Dorsolateral prefrontal cortex (tissue), 120 donors: ENCODE measurements at regions of chr11 and their contacts with region 1.

Region 1: DNA sequence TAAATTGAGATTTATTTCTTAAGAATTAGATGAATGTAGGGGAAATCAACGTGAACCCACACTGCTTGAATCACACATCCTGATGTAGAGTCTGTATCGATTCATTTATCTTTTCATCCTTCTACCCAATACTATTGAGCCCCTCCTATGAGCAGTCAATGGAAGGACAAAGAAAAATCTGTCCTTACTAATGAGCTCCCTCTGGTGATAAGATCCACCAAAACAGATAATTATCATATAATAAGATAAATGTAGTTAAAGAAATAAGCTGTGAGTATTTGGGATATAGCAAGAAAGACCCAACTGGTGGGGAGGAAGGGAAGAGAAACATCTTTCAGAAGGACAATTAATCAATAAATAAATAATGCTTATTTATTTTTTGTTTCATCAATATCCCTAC is 385.1 kb upstream of the CCDC90B start:
- DNase-seq: no peak
- H3K4me3 ChIP-seq: no peak overlapping the region
- H3K27ac ChIP-seq: peak overlapping the region in 6 of 59 donors; percentile 0 to 36 (median 18)
- H3K27me3 ChIP-seq: no peaks in the 10 kb centered on the region
- CTCF ChIP-seq: peak in 47 of 56 donors; percentile 5 to 67 (median 39)

Region 2: DNA sequence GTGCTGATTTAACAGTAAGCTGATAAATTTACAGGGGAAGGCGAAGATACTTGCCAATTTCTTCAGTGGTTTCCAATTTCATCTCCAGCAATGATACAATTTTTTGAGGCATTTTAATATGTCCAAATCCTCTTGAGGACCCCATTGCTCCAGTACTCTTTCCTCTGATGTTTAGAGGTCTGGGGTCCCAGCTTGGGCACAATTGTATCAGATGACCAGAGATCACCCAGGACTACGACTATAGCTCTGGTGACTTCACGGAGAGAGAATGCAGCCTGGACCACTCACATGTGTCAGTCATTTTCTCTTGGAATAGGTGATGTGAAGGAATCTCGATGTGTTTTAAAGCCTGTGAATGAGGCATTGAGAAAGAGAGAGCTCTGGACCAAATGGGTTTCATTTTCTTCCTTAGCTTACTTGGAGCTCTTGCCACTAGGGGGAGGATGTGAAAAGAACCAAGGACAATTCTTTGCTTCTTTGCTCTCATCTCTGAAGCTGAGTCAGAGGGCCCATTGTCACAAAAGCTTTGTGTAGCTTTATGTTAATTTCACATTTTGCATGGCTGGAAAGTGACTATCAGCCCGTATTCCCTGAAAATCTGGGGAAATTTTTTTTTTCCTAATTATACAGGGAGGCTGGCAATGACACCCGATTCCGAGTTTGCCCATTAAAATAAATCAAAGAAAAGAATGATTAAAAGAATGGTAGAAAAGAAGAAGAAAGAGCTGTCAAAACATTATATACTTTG is 378.4 kb before region 1 on chr11:
- intact Hi-C with region 1: loop called (anchors 5 to 10 kb)
- DNase-seq: peak in 3 of 10 donors; percentile 10 to 57 (median 47)
- H3K4me3 ChIP-seq: peak overlapping the region in 55 of 59 donors; percentile 4 to 64 (median 40)
- H3K27ac ChIP-seq: peak overlapping the region in 54 of 59 donors; percentile 13 to 88 (median 68)
- H3K27me3 ChIP-seq: no peaks in the 10 kb centered on the region
- CTCF ChIP-seq: peak; percentile 61 to 93 (median 84)

Region 3: DNA sequence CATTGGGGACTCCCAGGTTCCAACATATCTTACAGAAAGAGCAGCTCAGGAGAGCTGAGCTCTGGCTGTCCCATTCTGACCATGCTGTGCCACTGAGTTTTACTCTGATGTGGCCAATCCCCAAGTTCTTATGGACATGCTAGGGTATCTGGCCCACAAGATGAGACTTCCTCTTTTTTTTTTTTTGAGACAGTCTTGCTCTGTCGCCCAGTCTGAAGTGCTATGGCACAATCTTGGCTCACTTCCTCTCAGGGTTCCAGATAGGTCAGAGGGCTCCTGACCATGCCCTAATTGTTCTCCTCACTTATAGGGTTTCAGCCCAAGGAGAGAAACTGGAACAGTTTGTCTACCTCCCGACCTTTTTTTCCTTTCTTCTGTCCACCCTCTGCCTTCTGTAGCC is 232.9 kb before region 1 on chr11:
- intact Hi-C with region 1: no loop called
- DNase-seq: no peak
- H3K4me3 ChIP-seq: no peak overlapping the region
- H3K27ac ChIP-seq: no peak overlapping the region
- H3K27me3 ChIP-seq: no peaks in the 10 kb centered on the region
- CTCF ChIP-seq: no peak

Region 4: GRCh38 chr11:83521647-83522596 is 149.4 kb before region 1 on chr11:
- intact Hi-C with region 1: loop called in 1 of 2 experiments (anchors 5 kb)
- DNase-seq: no peak
- H3K4me3 ChIP-seq: no peak overlapping the region
- H3K27ac ChIP-seq: peak overlapping the region in 13 of 59 donors; percentile 7 to 61 (median 33)
- H3K27me3 ChIP-seq: no peaks in the 10 kb centered on the region
- CTCF ChIP-seq: peak in 39 of 56 donors; percentile 10 to 58 (median 30)

Region 5: GRCh38 chr11:83612891-83613766 is 58.2 kb before region 1 on chr11:
- intact Hi-C with region 1: loop called in 1 of 2 experiments (anchors 10 kb)
- DNase-seq: peak in 2 of 10 donors; percentile 16 to 27
- H3K4me3 ChIP-seq: no peak overlapping the region
- H3K27ac ChIP-seq: peak overlapping the region in 36 of 59 donors; percentile 6 to 91 (median 61)
- H3K27me3 ChIP-seq: no peaks in the 10 kb centered on the region
- CTCF ChIP-seq: no peak